ENCODE measurements at regions of chrX and their contacts with region 1.

Region 1: DNA sequence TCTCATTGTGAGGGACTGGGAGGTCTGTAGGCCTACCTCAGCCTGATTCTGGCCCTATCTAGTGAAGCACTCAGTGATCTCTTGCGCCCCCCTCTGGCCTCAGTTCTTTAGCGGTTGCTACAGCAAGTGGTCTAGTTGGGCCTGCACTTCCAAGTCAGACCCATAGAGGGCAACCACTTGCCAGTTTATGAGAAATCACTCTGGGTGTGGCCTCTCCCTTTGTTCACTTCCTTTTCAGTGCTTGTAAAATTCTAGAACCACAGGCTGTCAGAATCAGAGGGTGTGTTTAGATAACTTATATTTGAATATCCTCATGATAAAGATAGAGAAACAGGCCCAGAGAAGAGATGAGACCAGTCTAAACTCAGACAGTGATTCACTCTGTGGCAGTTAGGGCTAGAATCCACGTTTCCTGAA is 60.9 kb upstream of the LAS1L start:
- DNase-seq: peak; percentile 99
- H3K4me3 Mint-ChIP-seq: peak overlapping the region; percentile 62
- H3K27ac Mint-ChIP-seq: peak overlapping the region; percentile 98
- H3K4me1 Mint-ChIP-seq: peaks cover 47% of the 10 kb centered on the region
- H3K27me3 Mint-ChIP-seq: no peaks in the 10 kb centered on the region

Region 2: DNA sequence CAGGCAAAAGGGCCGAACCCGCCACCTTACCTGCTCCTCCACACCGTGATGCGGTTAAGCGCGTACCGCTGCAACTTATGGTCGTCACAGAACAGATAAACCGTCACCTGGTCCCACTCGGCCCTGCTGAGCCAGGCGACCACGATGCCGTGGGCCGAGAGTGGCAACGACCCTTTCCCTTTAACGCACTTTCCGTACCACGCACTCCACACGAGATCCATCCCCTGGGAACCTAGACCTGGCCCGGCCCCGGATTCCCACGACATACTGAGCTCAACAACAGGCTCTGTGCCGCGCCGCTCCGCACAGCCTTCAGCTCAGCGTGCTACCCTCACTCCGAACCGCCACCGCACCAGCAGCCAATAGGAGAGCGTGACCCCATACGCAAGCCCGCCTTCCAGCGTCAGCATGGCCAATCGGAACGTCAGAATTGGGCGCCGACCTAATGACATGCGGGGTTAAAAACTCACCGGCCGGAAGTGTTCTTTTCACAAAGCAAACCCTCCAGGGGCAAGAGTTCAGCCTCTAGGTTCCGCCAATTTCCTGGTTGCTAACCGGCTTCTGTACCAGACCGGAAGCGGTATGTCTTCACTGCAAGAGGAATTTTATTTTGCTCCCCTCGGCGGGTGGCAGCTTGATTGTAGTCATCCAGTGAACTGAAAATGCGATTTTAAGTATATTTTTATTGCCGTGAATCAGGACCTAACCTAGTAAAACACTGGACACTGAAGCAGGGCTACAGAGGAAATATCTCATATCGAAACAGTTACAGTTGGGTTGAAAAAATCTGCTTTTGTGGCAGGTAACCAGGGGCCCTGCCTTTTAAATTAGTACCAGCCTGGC is 60.8 kb before region 1 on chrX and contains the start of gene LAS1L:
- CTCF ChIA-PET with region 1: no interaction called
- intact Hi-C with region 1: loop called (anchors 2 kb)
- DNase-seq: peak; percentile 93
- H3K4me3 Mint-ChIP-seq: peak within 1 kb of the TSS; percentile 96
- H3K27ac Mint-ChIP-seq: peak within 1 kb of the TSS; percentile 89
- H3K4me1 Mint-ChIP-seq: peaks cover 16% of the 10 kb centered on the region
- H3K27me3 Mint-ChIP-seq: no peaks in the 10 kb centered on the region
- total RNA-seq, gene LAS1L: 60.4 to 61.1 TPM

Region 3: DNA sequence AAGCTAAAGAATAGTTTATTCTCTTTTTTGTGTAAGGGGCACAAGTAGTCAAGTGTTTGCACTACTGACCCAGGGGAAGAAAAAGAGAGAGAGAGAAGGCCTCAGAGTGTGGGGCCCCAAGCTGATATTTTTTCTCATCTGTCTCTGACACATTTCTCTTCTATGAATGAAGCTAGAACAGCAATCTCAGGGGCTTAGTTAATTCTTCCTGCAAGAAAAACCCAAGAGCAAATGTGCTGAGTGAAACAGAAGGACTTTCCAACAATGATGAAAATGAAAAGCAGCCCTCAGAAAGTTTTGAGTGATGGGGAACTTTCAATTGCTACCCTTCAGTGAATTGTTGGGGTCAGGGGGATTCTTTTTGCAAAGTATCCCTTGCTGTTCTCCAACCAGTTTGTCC is 62.8 kb after region 1 on chrX:
- CTCF ChIA-PET with region 1: interaction called, 3 read pairs
- intact Hi-C with region 1: loop called (anchors 1 kb)
- DNase-seq: no peak
- H3K4me3 Mint-ChIP-seq: no peak overlapping the region
- H3K27ac Mint-ChIP-seq: peak overlapping the region; percentile 74
- H3K4me1 Mint-ChIP-seq: peaks cover 39% of the 10 kb centered on the region
- H3K27me3 Mint-ChIP-seq: no peaks in the 10 kb centered on the region

Region 4: GRCh38 chrX:65697915-65698796 is 102.7 kb after region 1 on chrX:
- CTCF ChIA-PET with region 1: interaction called, 9 read pairs
- intact Hi-C with region 1: loop called (anchors 1 kb)
- DNase-seq: peak; percentile 82
- H3K4me3 Mint-ChIP-seq: peak overlapping the region; percentile 50
- H3K27ac Mint-ChIP-seq: peak overlapping the region; percentile 95
- H3K4me1 Mint-ChIP-seq: peaks cover 86% of the 10 kb centered on the region
- H3K27me3 Mint-ChIP-seq: no peaks in the 10 kb centered on the region

Region 5: DNA sequence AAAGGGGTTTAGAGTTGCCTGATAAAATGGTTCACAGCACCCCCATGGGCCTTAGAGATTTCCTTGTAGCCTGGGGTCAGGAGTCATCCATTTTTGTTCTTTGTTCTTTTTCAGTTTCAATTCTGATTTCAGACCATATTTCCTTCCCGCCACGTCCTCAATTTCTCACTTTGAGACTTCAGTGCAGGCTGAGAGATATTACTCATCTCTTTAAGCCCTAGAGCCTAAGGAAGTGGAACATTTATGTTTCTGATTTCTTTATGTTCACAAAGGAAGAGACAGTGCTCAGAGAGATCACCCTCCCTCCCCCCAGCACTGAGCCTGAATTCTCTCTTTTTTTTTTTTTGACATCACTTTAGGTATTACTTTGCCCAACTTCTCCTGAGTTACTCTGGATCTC is 128.2 kb after region 1 on chrX:
- CTCF ChIA-PET with region 1: interaction called, 10 read pairs
- intact Hi-C with region 1: loop called (anchors 1 kb)
- DNase-seq: peak; percentile 60
- H3K4me3 Mint-ChIP-seq: peak overlapping the region; percentile 29
- H3K27ac Mint-ChIP-seq: peak overlapping the region; percentile 88
- H3K4me1 Mint-ChIP-seq: peaks cover 88% of the 10 kb centered on the region
- H3K27me3 Mint-ChIP-seq: no peaks in the 10 kb centered on the region

Region 6: DNA sequence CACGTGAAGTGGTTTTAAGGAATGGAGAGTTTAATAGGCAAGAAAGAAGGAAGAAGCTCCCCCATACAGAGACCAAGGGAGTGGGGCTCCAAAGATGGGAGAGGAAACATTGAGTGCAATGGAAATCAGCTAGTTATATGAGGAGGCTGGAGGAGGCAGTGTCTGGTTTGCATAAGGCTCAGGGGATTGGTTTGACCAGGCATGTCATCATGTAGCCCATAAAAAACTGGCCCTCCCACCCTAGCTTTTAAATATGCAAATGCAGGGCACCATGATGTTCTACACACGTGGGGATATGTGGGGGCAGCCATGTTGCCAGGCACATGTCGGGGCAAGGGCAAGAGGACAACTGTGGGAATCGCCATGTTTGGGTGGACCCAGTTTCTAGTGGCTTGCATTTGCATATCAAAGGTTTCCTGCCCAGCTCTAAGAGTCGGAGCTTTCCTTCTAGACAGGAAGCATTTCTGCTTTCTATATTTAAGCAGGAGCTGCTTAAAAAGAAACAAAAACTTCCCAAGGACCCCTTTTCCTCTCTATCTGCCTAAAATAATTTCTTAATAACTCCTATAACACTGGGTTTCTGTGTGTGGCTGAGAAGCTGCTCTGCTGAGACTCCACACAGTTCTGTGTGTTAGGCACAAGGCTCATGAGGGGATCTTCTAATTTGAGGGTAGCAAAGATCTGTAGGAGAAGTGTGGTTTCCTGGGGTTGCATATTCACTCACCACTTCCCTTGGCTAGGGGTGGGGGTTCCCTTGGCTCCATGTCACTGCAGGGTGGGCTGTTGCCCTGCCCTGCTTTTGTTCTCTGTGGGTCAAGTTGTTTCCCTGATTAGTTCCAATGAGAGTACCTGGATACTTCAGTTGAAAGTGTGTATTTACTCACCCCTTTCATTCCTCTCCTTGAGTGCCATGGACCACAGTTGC is 330.9 kb after region 1 on chrX:
- CTCF ChIA-PET with region 1: no interaction called
- intact Hi-C with region 1: loop called (anchors 1 kb)
- DNase-seq: peak; percentile 61
- H3K4me3 Mint-ChIP-seq: peak overlapping the region; percentile 34
- H3K27ac Mint-ChIP-seq: peak overlapping the region; percentile 69
- H3K4me1 Mint-ChIP-seq: peaks cover 57% of the 10 kb centered on the region
- H3K27me3 Mint-ChIP-seq: no peaks in the 10 kb centered on the region

Region 7: GRCh38 chrX:65941775-65942174 is 346.3 kb after region 1 on chrX:
- CTCF ChIA-PET with region 1: no interaction called
- intact Hi-C with region 1: no loop called
- DNase-seq: no peak
- H3K4me3 Mint-ChIP-seq: no peak overlapping the region
- H3K27ac Mint-ChIP-seq: no peak overlapping the region
- H3K4me1 Mint-ChIP-seq: peaks cover 18% of the 10 kb centered on the region
- H3K27me3 Mint-ChIP-seq: no peaks in the 10 kb centered on the region

Region 8: DNA sequence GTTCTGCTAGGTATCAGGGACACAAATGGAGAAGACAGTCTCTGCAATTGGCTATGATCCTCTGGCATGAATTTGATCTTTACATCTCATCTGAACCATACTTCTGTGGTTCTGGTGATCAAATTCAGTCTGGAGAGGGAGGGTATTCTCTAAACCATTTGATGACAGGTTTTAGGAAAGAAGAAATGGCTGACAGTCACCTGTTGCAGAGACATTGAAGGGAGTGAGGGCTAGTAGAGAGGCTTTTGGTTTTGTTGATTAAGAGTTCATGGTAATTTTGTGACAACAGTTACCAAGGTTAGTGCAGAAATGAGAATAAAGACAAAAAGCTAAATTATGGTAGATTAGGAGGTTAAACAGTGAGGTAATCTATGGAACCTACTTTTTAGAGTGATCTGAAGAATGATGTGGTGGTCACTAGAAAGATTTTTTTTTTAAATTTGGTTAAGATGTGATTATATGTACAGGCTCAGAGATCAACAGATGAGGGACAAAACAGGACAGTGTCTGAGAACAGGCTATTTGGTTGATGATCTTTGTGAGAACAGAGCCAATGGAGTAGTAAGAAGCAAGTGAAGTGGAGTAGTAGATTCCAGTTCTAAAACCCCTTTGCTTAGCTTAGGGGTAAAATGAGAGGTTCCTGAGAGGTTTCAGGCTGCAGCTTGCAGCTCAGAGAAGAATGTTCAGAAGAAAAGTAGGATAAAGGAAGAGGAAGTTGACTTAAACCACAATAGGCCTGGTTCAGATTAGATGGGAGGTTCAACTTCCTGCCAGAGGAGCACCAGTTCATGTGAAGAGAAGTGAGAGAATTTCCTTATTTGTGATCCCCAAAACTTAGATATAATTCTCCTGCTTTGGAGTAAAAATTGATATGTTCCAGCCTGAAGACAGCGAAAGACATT is 409.7 kb after region 1 on chrX:
- CTCF ChIA-PET with region 1: no interaction called
- intact Hi-C with region 1: loop called (anchors 5 kb)
- DNase-seq: no peak
- H3K4me3 Mint-ChIP-seq: no peak overlapping the region
- H3K27ac Mint-ChIP-seq: peak overlapping the region; percentile 61
- H3K4me1 Mint-ChIP-seq: peaks cover 57% of the 10 kb centered on the region
- H3K27me3 Mint-ChIP-seq: no peaks in the 10 kb centered on the region

Measured in activated naive CD4-positive, alpha-beta T cell treated with anti-CD3 and anti-CD28 coated beads for 36 hours (primary cell).